GM18951 (cell line): ENCODE measurements at regions of chr2 and their contacts with region 1.

Region 1: GRCh38 chr2:45484965-45485364 is 126.1 kb downstream of the SRBD1 start:
- POLR2A ChIP-seq: no peak

Region 2: GRCh38 chr2:44759823-44760222 is 725.1 kb before region 1 on chr2:
- in situ Hi-C with region 1: no loop called
- POLR2A ChIP-seq: no peak

Region 3: DNA sequence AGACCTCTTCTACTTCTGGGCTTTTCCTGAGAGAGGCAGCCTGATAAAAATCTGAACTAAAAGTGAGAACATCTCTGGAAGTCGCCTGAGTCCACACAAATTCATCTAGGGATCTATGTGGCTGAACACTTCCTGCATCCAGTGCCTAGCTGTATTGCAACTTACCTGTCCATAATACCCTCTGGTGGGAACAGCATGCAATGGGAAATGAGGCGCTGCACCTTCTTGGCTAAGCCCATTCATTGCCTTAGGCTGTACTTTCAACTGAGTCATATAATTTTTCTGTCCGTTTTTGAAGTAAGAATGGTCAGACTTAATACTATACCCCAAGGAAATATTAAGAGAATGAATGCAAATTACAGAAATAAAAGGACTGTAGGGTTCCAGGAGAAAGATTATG is 497.9 kb before region 1 on chr2:
- in situ Hi-C with region 1: loop called (anchors 5 kb)
- POLR2A ChIP-seq: no peak

Region 4: DNA sequence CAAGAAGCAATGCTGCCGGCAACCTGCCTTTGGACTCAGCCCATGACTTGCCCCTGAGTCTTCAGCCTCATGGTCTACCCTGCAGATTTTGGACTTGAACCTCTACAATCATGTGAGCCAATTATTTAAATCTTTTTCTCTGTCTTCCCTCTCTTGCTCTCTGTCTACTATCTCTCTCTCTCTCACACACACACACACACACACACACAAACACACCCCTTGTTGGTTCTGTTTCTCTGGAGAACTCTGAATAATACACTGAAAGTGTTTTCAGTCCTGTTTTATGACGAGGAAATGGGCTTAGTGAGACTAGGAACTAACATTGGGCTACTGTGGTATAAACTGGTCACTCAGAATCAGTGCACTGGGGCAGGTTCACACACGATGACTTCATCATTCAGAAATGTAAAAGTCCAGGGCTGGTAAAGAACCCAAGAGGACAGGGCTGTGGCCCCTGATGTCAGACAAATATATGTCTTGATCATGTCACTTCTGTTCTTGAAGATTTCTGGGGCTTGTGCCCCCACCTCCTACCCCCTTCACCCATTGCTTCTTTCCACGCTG is 209.6 kb before region 1 on chr2:
- in situ Hi-C with region 1: no loop called
- POLR2A ChIP-seq: no peak

Region 5: DNA sequence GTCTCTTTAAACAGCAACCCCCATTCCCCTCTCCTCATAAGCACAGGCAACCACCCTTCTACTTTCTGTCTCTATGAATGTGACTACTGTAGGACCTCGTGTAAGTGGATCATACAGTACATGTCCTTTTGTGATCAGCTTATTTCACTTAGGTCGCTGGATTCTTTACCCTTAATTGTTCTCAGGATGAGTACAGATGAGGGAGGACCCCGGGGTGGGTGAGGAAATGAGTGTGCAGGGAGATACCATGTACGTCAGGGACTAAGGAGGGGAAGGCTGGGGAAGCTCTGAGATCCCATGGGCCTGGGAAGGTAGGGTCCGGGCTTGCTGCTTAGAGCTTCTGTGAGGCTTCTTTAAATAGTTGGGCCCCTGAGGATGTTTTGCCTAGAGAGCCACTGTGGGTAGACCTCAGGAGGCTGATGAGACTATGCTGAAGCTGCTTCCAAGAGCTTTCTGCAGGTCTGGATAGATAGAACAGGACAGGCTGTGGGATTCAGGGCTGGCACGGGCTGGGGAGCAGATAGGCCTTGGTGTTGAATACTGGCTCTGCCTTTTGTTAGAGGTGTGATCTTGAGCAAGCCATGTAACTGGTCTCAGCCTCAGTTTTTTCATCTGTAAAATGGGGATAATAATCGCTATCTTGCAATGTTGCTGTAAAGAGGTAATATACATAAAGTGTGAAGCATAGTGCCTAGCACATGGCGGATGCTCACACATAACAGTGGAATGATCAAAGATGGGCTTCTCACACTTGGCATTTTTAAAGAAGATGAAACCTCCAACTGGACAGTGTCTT is 321.8 kb after region 1 on chr2:
- in situ Hi-C with region 1: no loop called
- POLR2A ChIP-seq: no peak